ENCODE measurements at regions of chr15 and their contacts with region 1.

Region 1: GRCh38 chr15:25933456-25934158 is 70.5 kb upstream of the ATP10A start:
- DNase-seq: peak; percentile 75
- H3K4me3 Mint-ChIP-seq: peak overlapping the region; percentile 70
- H3K27ac Mint-ChIP-seq: no peak overlapping the region
- H3K4me1 Mint-ChIP-seq: peaks cover 8% of the 10 kb centered on the region
- H3K27me3 Mint-ChIP-seq: peaks cover 7% of the 10 kb centered on the region

Region 2: DNA sequence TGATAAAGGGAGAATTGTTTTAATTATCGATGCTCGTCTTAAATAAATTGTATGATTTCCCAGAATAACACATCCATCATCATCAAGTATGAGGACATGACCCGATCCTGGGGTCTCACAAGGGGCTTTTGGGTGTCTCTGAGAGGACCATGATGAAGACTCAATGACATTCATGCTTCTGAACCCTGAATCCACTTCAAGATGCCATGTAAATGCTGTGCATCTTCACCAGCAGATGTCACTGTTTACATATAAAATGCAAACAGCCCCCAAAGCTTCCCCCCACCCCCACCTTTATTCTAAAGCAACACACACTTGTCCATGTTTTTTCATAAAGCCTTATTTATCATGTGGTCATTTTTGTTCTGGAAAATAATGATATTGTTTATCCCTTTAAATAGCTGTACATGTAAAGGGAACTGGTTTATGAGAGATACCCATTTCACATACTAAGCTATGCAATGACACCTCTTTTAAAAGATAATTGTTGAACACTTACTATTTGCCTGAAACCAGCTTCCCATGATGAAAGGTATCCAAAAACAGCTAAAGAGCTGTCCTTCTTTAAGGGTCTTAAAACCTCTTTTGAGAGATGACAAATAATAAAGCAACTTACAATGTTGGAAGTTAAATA is 425.1 kb before region 1 on chr15:
- CTCF ChIA-PET with region 1: interaction called, 17 read pairs
- POLR2A ChIA-PET with region 1: no interaction called
- DNase-seq: no peak
- H3K4me3 Mint-ChIP-seq: no peak overlapping the region
- H3K27ac Mint-ChIP-seq: no peak overlapping the region
- H3K4me1 Mint-ChIP-seq: no peaks in the 10 kb centered on the region
- H3K27me3 Mint-ChIP-seq: no peaks in the 10 kb centered on the region

Region 3: DNA sequence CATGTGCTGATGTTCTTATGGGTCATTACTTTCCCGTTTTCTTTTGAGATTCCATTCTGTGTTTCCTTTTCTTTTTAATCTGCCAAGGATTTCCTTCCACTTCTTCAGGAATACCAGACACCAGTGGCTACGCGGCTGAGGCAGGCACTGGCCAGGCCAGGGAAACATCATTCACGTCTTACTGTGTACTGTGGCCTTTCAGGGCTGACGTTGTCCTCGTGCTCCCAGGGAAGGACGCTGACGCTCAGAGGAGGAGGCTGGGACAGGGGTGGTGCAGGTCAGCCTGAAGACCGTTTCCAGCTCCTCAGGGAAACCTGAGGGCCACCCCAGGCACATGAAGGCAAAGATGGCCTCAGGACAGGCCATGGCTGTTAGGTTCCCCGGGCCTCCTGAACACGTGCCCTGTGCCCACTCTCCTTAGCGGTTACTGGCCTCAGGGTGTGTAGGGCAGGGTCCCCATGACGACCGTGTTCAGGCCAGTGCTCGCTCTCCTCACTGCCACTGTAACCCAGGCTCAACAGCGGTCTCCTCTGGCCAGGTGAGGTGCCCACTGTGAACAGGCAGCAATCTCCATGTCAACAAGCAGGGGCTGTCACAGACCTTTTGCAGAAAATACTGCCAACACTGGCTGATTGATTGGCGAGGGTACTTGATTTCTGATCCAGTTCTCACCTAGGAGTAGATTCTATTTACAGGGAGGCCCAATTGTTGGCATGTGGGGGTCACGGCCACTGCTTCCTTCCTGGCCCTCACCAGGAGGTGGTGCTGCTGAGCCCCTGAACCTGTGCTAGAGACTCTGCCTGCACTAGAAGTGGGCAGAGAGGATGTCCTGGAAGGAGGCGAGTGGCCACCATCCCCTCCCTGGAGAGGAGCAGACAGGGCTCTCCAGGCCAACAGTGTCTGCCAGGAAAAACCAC is 240.0 kb before region 1 on chr15:
- CTCF ChIA-PET with region 1: interaction called, 14 read pairs
- POLR2A ChIA-PET with region 1: no interaction called
- DNase-seq: peak; percentile 39
- H3K4me3 Mint-ChIP-seq: no peak overlapping the region
- H3K27ac Mint-ChIP-seq: no peak overlapping the region
- H3K4me1 Mint-ChIP-seq: no peaks in the 10 kb centered on the region
- H3K27me3 Mint-ChIP-seq: no peaks in the 10 kb centered on the region

Region 4: GRCh38 chr15:25739687-25740121 is 193.9 kb before region 1 on chr15:
- CTCF ChIA-PET with region 1: interaction called, 10 read pairs
- POLR2A ChIA-PET with region 1: no interaction called
- DNase-seq: peak; percentile 31
- H3K4me3 Mint-ChIP-seq: no peak overlapping the region
- H3K27ac Mint-ChIP-seq: no peak overlapping the region
- H3K4me1 Mint-ChIP-seq: peaks cover 10% of the 10 kb centered on the region
- H3K27me3 Mint-ChIP-seq: no peaks in the 10 kb centered on the region

Region 5: GRCh38 chr15:25783607-25784540 is 149.7 kb before region 1 on chr15:
- CTCF ChIA-PET with region 1: interaction called, 13 read pairs
- POLR2A ChIA-PET with region 1: no interaction called
- DNase-seq: peak; percentile 43
- H3K4me3 Mint-ChIP-seq: no peak overlapping the region
- H3K27ac Mint-ChIP-seq: no peak overlapping the region
- H3K4me1 Mint-ChIP-seq: peaks cover 22% of the 10 kb centered on the region
- H3K27me3 Mint-ChIP-seq: no peaks in the 10 kb centered on the region

Measured in activated CD4-positive, alpha-beta memory T cell treated with anti-CD3 and anti-CD28 coated beads, Interleukin-2, amount 10 ng/mL, durations not matched to agents 7 days and 5 days (primary cell).